Mammary epithelial cell (primary cell): ENCODE measurements at regions of chr2 and their contacts with region 1.

Region 1: GRCh38 chr2:28452534-28453081 is 43.3 kb upstream of the PLB1 start:
- DNase-seq: no peak
- H3K4me3 ChIP-seq: no peak overlapping the region
- H3K27ac ChIP-seq: no peak overlapping the region
- H3K4me1 ChIP-seq: peaks cover 52% of the 10 kb centered on the region
- H3K27me3 ChIP-seq: no peaks in the 10 kb centered on the region
- CTCF ChIP-seq: peak; percentile 98 to 99

Region 2: GRCh38 chr2:27754138-27754588 is 698.4 kb before region 1 on chr2:
- CTCF ChIA-PET with region 1: no interaction called
- dilution Hi-C with region 1: no loop called
- in situ Hi-C with region 1: no loop called
- intact Hi-C with region 1: loop called (anchors 1 kb)
- DNase-seq: peak; percentile 76
- H3K4me3 ChIP-seq: no peak overlapping the region
- H3K27ac ChIP-seq: peak overlapping the region; percentile 91
- H3K4me1 ChIP-seq: peaks cover 21% of the 10 kb centered on the region
- H3K27me3 ChIP-seq: no peaks in the 10 kb centered on the region
- CTCF ChIP-seq: peak; percentile 97 to 99

Region 3: GRCh38 chr2:27807476-27807875 is 645.1 kb before region 1 on chr2:
- CTCF ChIA-PET with region 1: no interaction called
- dilution Hi-C with region 1: no loop called
- in situ Hi-C with region 1: no loop called
- intact Hi-C with region 1: loop called (anchors 1 kb)
- DNase-seq: peak; percentile 35
- H3K4me3 ChIP-seq: no peak overlapping the region
- H3K27ac ChIP-seq: no peak overlapping the region
- H3K4me1 ChIP-seq: peaks cover 28% of the 10 kb centered on the region
- H3K27me3 ChIP-seq: no peaks in the 10 kb centered on the region
- CTCF ChIP-seq: peak; percentile 62 to 75

Region 4: DNA sequence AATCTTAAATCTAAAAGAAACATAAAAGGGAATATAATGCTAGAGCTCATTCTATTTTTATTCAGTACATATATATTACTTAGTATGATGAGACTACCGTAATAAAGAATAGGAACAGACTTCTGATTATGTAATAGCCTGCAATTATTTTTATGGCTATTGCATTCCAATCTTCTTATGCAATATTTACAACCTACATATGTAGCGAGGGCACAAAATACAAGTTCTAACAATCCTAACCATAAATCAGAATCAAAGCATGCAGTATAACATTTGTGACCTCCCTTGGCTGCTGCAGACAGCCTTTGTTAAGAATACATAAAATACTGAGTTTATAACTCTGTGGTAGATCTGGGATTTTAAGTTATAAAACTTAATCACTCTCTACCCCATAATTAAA is 384.5 kb before region 1 on chr2:
- CTCF ChIA-PET with region 1: no interaction called
- dilution Hi-C with region 1: no loop called
- in situ Hi-C with region 1: no loop called
- intact Hi-C with region 1: no loop called
- DNase-seq: peak; percentile 68
- H3K4me3 ChIP-seq: no peak overlapping the region
- H3K27ac ChIP-seq: no peak overlapping the region
- H3K4me1 ChIP-seq: no peaks in the 10 kb centered on the region
- H3K27me3 ChIP-seq: no peaks in the 10 kb centered on the region
- CTCF ChIP-seq: no peak

Region 5: DNA sequence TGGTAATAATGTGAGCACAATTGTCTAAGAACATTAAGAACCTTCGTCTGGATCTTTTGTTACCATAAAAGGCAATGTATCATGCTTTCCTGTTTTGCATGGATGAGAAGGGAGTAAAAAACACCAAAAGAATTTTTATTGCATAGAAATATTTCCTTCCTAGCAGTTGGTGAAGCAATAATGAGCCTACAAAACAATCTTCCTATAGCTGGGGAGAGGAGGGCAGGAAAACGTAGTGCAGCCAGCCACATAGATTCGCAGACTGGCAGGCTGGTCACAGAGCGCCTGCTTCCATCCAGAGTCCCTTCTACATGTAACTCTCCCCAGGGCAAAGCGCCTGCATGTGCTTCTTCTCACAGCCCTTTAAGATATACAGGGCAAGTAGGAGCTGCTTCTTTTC is 371.7 kb before region 1 on chr2:
- CTCF ChIA-PET with region 1: no interaction called
- dilution Hi-C with region 1: no loop called
- in situ Hi-C with region 1: no loop called
- intact Hi-C with region 1: loop called (anchors 10 kb)
- DNase-seq: no peak
- H3K4me3 ChIP-seq: no peak overlapping the region
- H3K27ac ChIP-seq: no peak overlapping the region
- H3K4me1 ChIP-seq: no peaks in the 10 kb centered on the region
- H3K27me3 ChIP-seq: no peaks in the 10 kb centered on the region
- CTCF ChIP-seq: no peak

Region 6: GRCh38 chr2:28155627-28156026 is 297.0 kb before region 1 on chr2:
- CTCF ChIA-PET with region 1: no interaction called
- dilution Hi-C with region 1: no loop called
- in situ Hi-C with region 1: no loop called
- intact Hi-C with region 1: loop called (anchors 2 kb)
- DNase-seq: no peak
- H3K4me3 ChIP-seq: no peak overlapping the region
- H3K27ac ChIP-seq: no peak overlapping the region
- H3K4me1 ChIP-seq: peaks cover 16% of the 10 kb centered on the region
- H3K27me3 ChIP-seq: no peaks in the 10 kb centered on the region
- CTCF ChIP-seq: peak; percentile 68 to 88

Region 7: GRCh38 chr2:28413899-28414295 is 38.7 kb before region 1 on chr2:
- CTCF ChIA-PET with region 1: no interaction called
- dilution Hi-C with region 1: no loop called
- in situ Hi-C with region 1: loop called in 1 of 2 experiments (anchors 5 kb)
- intact Hi-C with region 1: loop called (anchors 2 kb)
- DNase-seq: no peak
- H3K4me3 ChIP-seq: no peak overlapping the region
- H3K27ac ChIP-seq: no peak overlapping the region
- H3K4me1 ChIP-seq: peaks cover 40% of the 10 kb centered on the region
- H3K27me3 ChIP-seq: no peaks in the 10 kb centered on the region
- CTCF ChIP-seq: no peak